Right cardiac atrium (tissue), 5 donors: ENCODE measurements at regions of chr1 and their contacts with region 1.

Region 1: GRCh38 chr1:198157241-198157846 is 546 bp downstream of the NEK7 start:
- DNase-seq: peak; percentile 89 to 96 (median 94)
- ATAC-seq: peak; percentile 78 to 80
- H3K4me3 ChIP-seq: peak overlapping the region; percentile 95
- H3K27ac ChIP-seq: peak overlapping the region; percentile 98
- H3K4me1 ChIP-seq: no peaks in the 10 kb centered on the region
- H3K27me3 ChIP-seq: no peaks in the 10 kb centered on the region

Region 2: GRCh38 chr1:196493881-196494280 is 1663.5 kb before region 1 on chr1:
- intact Hi-C with region 1: no loop called
- DNase-seq: no peak
- ATAC-seq: no peak
- H3K4me3 ChIP-seq: no peak overlapping the region
- H3K27ac ChIP-seq: no peak overlapping the region
- H3K4me1 ChIP-seq: no peaks in the 10 kb centered on the region
- H3K27me3 ChIP-seq: no peaks in the 10 kb centered on the region

Region 3: DNA sequence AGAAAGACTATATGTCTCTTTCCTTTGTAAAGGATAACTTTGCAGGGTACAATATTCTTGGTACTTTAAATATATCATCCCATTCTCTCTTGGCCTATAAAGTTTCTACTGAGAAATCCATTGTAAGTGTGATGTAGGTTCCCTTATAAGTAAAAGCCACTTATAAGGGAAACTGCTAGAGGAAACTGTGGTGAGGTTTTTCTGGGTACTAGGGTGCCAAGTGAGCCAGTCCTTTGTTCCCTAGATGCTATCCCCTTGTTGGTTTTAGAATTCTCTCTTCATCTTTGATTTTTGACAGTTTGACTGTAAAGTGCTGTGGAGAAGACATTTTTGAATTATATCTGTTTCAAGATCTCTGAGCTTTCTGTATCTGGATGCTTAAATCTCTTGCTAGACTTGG is 109.4 kb before region 1 on chr1:
- intact Hi-C with region 1: no loop called
- DNase-seq: no peak
- ATAC-seq: no peak
- H3K4me3 ChIP-seq: no peak overlapping the region
- H3K27ac ChIP-seq: no peak overlapping the region
- H3K4me1 ChIP-seq: no peaks in the 10 kb centered on the region
- H3K27me3 ChIP-seq: no peaks in the 10 kb centered on the region

Region 4: DNA sequence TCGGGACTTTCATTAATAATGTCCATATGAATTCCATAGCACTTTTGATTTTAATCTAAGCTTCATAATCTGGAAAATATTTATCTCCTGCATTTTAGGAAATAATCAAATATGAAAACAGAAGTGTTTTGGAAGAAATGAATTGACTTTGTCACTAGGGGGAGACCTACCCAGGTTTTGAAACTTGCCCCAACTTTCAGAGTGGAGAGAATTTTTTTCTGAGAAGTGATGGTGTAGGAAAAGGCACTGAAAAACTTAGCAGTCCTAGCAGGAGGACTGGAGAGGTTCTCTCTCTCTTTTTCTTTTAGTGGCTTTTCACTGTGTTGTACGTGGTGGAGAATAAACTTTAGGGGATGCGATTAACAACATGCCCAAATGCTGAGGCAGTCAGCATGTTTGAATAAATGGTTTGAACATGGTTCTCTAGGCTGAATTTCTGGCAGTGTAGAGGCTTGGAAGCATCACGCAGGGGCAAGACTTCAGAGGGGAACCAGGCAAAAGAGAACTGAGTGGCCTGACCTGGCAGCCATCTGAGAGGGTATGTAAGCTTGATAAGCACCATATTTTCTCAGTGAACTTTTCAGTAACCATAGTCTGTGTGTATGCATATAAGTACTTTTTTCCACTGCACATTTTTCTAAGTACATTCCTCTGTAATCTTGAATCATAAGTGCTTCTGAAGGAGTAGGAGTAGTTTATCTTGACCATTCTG is 68.8 kb before region 1 on chr1:
- intact Hi-C with region 1: loop called in 1 of 4 experiments (anchors 10 kb)
- DNase-seq: no peak
- ATAC-seq: peak; percentile 29 to 50
- H3K4me3 ChIP-seq: no peak overlapping the region
- H3K27ac ChIP-seq: no peak overlapping the region
- H3K4me1 ChIP-seq: peaks cover 3% of the 10 kb centered on the region
- H3K27me3 ChIP-seq: no peaks in the 10 kb centered on the region

Region 5: GRCh38 chr1:198201956-198202784 is 44.8 kb after region 1 on chr1:
- intact Hi-C with region 1: loop called in 1 of 4 experiments (anchors 10 kb)
- DNase-seq: peak in 1 of 3 donors; percentile 32
- ATAC-seq: peak in 1 of 2 donors; percentile 22
- H3K4me3 ChIP-seq: peak overlapping the region; percentile 15
- H3K27ac ChIP-seq: peak overlapping the region; percentile 58
- H3K4me1 ChIP-seq: peaks cover 9% of the 10 kb centered on the region
- H3K27me3 ChIP-seq: no peaks in the 10 kb centered on the region